A673 (cell line): ENCODE measurements at regions of chr1 and their contacts with region 1.

Region 1: DNA sequence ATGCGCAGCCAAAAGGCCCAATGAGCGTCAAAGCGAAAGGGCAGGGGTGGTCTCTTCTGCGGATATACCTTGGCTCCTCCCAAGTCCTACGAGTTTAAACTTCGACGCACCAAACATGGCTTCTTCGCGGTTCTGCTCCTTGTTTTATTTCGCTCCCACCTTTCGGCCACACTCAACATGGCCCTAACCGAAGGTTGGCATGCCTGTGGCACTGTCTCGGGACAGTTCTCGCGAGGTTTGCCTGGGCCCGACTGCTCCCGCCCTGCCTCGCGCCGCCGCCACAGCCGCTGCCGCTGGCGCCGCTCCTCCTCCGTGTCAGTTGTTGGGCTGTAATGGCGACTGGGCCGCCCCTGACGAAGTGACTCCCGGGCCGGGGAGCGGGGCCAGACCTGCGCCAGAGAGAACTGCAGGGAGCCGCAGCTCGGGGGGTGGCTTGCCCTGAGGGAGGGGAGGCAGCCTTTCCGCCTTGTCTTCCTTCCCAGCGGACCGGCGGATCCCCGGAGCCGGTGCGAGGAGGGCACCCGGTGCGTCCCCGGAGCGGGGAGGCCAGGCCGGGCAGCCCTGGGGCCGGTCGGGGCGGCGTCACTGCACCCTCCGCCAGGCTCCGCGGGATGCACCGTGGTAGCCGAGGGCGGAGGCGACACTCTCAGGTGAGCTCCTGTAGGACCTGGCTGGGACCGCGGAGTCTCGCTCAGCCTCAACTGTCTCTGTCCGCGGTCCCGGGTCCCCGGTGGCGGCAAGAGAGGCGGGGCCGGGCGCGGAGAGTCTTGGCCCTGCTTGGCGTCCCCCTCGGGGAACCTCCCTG is at the start of gene CEP350:
- DNase-seq: peak; percentile 99
- H3K4me3 ChIP-seq: peak within 1 kb of the TSS; percentile 97
- H3K27ac ChIP-seq: peak within 1 kb of the TSS; percentile 96
- H3K4me1 ChIP-seq: peaks cover 27% of the 10 kb centered on the region
- H3K27me3 ChIP-seq: no peaks in the 10 kb centered on the region
- CTCF ChIP-seq: no peak
- total RNA-seq, gene CEP350: 39.2 and 42.2 TPM in 2 replicates

Region 2: GRCh38 chr1:179882243-179883039 is 72.3 kb before region 1 on chr1 and contains the start of gene TOR1AIP1:
- CTCF ChIA-PET with region 1: no interaction called
- POLR2A ChIA-PET with region 1: no interaction called
- intact Hi-C with region 1: loop called (anchors 1 kb)
- DNase-seq: peak; percentile 99
- H3K4me3 ChIP-seq: peak within 1 kb of the TSS; percentile 76
- H3K27ac ChIP-seq: peak within 1 kb of the TSS; percentile 98
- H3K4me1 ChIP-seq: peaks cover 20% of the 10 kb centered on the region
- H3K27me3 ChIP-seq: no peaks in the 10 kb centered on the region
- CTCF ChIP-seq: 0 out of 2 replicates have a peak, but pooled peaks have one; percentile 29
- total RNA-seq, gene TOR1AIP1: 25.9 and 31.9 TPM in 2 replicates

Region 3: DNA sequence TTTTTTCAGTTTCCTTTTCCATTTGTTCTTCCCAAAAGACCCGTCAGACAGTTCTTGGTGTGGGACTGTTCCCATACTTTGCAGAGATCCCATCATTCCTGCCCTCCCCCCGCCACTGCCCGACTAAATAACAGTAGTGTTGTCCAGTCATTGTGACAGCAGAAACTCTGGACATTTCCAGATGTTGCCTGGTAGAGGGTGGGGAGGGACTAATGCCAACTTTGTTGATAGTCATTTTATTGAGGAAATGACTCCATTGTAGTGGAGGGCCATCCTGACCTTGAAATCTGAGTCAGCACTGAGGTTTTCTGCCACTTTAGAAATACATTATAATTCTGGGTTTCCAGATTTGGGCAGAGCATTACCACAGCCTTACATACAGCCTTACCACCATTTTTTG is 85.3 kb after region 1 on chr1:
- CTCF ChIA-PET with region 1: no interaction called
- POLR2A ChIA-PET with region 1: no interaction called
- intact Hi-C with region 1: no loop called
- DNase-seq: no peak
- H3K4me3 ChIP-seq: no peak overlapping the region
- H3K27ac ChIP-seq: no peak overlapping the region
- H3K4me1 ChIP-seq: no peaks in the 10 kb centered on the region
- H3K27me3 ChIP-seq: no peaks in the 10 kb centered on the region
- CTCF ChIP-seq: no peak

Region 4: DNA sequence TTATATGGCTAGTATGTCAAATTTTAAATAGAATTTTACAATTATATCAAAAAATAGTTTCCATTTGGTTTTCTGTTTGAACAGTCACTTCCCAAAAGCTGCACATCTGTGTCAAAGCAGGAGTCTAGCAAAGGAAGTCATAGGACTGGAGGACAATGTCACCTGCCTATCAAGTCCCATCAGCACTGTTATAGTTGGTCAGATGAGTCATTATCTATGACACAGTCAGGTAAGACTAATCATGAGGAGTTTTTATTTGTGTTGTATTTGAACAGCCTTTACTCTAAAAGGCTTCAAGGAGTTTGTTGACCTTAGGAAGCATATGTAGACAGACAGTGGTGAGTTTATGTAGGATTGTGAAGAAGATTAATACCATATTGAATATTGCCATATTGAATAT is 125.7 kb after region 1 on chr1:
- CTCF ChIA-PET with region 1: no interaction called
- POLR2A ChIA-PET with region 1: interaction called, 12 read pairs
- intact Hi-C with region 1: no loop called
- DNase-seq: no peak
- H3K4me3 ChIP-seq: no peak overlapping the region
- H3K27ac ChIP-seq: no peak overlapping the region
- H3K4me1 ChIP-seq: no peaks in the 10 kb centered on the region
- H3K27me3 ChIP-seq: no peaks in the 10 kb centered on the region
- CTCF ChIP-seq: no peak

Region 5: DNA sequence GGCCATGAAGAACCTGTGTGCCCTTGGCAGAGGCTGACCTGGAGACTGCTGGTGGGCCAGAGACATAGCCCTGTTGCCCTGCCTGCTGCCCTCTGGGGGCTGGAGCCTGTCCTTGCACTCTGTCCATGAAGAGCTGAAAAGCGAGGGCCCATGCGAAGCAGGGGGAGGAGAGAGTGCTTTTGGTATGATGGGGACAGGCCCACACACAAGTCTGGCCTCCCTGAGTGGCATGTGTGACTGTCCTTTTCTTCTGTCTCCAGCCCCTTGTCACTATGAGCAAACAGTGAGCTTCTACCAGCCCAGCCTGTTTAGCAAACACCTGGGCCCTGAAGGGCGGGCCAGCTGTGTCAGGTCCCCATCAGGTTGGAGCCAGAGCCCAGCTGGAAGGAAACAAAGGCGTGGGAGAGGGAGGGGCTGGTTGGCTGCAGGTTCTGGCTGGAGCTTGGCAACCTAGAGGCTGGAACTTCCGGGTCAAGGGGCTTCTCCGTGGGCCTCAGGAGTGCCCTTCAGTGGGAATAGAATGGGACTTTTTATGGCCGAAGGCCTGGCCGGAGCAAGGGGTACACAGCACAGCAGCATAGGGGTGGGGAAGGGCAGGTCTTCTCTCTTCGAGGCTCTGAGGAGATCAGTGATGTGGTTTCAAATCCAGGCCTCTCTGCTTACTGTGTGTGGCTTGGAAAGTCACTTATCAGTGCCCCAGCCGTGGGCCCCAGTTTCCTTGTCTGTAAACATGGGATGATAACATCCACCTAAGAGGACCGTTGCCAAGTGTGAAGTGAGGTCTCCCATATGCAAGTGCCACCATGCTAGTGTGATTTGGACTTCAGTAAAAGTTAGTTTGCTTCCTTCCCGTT is 214.3 kb after region 1 on chr1:
- CTCF ChIA-PET with region 1: no interaction called
- POLR2A ChIA-PET with region 1: no interaction called
- intact Hi-C with region 1: loop called (anchors 10 kb)
- DNase-seq: peak; percentile 51
- H3K4me3 ChIP-seq: no peak overlapping the region
- H3K27ac ChIP-seq: no peak overlapping the region
- H3K4me1 ChIP-seq: peaks cover 21% of the 10 kb centered on the region
- H3K27me3 ChIP-seq: no peaks in the 10 kb centered on the region
- CTCF ChIP-seq: peak; percentile 59